Naive thymus-derived CD4-positive, alpha-beta T cell (primary cell): ENCODE measurements at regions of chr1 and their contacts with region 1.

Region 1: DNA sequence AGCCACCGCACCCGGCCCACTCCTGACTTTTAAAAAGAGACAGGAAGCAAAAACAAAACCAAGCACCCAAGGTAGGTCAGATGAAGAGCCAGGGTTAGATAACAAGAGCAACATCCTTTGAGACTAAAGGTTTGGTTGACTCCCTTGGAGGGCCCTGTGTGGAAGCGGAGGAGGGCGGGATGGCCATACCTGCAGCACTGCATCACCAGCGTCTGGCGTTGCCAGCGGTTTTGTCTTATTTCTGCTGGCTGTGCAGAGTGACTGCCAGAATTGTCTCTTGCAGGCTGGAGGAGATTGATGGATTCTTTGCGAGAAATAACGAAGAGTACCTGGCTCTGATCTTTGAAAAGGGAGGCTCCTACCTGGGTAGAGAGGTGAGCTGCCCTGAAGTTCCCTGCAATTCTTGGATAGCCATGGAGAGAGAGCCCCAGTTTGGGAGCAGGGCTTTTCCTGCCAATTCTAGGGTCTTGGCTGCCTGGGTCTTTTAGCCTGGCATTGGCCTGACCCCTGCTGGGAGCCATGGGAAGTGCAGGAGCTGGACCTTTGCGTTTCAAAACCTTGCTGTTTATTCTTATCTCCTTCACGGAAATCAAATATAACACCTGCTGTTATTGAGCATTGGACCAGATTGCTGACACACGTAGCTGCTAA is 24.0 kb downstream of the QSOX1 start:
- DNase-seq: peak; percentile 35 to 68 (median 55)
- ATAC-seq: peak; percentile 73
- H3K4me3 ChIP-seq: no peak overlapping the region
- H3K4me3 Mint-ChIP-seq: no peak overlapping the region
- H3K27ac ChIP-seq: no peak overlapping the region
- H3K27ac Mint-ChIP-seq: peak overlapping the region in 2 of 9 donors; percentile 9 to 55
- H3K4me1 ChIP-seq: no peaks in the 10 kb centered on the region
- H3K4me1 Mint-ChIP-seq: peaks cover 0 to 4% (median 0%) of the 10 kb centered on the region in 7 donors
- H3K27me3 ChIP-seq: no peaks in the 10 kb centered on the region
- H3K27me3 Mint-ChIP-seq: no peaks in the 10 kb centered on the region

Region 2: GRCh38 chr1:179706339-179706941 is 472.2 kb before region 1 on chr1:
- CTCF ChIA-PET with region 1: interaction called, 23 read pairs
- POLR2A ChIA-PET with region 1: no interaction called
- intact Hi-C with region 1: loop called (anchors 1 kb)
- DNase-seq: peak; percentile 27 to 78 (median 68)
- ATAC-seq: peak; percentile 33
- H3K4me3 ChIP-seq: no peak overlapping the region
- H3K4me3 Mint-ChIP-seq: no peak overlapping the region
- H3K27ac ChIP-seq: no peak overlapping the region
- H3K27ac Mint-ChIP-seq: peak overlapping the region in 6 of 9 donors; percentile 13 to 87 (median 72)
- H3K4me1 ChIP-seq: peaks cover 0 to 15% of the 10 kb centered on the region in 2 donors
- H3K4me1 Mint-ChIP-seq: peaks cover 6 to 25% (median 14%) of the 10 kb centered on the region in 7 donors
- H3K27me3 ChIP-seq: no peaks in the 10 kb centered on the region
- H3K27me3 Mint-ChIP-seq: peaks cover 0 to 6% (median 0%) of the 10 kb centered on the region in 5 donors

Region 3: GRCh38 chr1:180096584-180097332 is 81.9 kb before region 1 on chr1:
- CTCF ChIA-PET with region 1: interaction called, 9 read pairs
- POLR2A ChIA-PET with region 1: no interaction called
- intact Hi-C with region 1: loop called in 1 of 2 experiments (anchors 2 kb)
- DNase-seq: no peak
- ATAC-seq: no peak
- H3K4me3 ChIP-seq: no peak overlapping the region
- H3K4me3 Mint-ChIP-seq: no peak overlapping the region
- H3K27ac ChIP-seq: no peak overlapping the region
- H3K27ac Mint-ChIP-seq: no peak overlapping the region
- H3K4me1 ChIP-seq: peaks cover 0 to 5% of the 10 kb centered on the region in 2 donors
- H3K4me1 Mint-ChIP-seq: peaks cover 0 to 11% (median 0%) of the 10 kb centered on the region in 7 donors
- H3K27me3 ChIP-seq: no peaks in the 10 kb centered on the region
- H3K27me3 Mint-ChIP-seq: no peaks in the 10 kb centered on the region

Region 4: DNA sequence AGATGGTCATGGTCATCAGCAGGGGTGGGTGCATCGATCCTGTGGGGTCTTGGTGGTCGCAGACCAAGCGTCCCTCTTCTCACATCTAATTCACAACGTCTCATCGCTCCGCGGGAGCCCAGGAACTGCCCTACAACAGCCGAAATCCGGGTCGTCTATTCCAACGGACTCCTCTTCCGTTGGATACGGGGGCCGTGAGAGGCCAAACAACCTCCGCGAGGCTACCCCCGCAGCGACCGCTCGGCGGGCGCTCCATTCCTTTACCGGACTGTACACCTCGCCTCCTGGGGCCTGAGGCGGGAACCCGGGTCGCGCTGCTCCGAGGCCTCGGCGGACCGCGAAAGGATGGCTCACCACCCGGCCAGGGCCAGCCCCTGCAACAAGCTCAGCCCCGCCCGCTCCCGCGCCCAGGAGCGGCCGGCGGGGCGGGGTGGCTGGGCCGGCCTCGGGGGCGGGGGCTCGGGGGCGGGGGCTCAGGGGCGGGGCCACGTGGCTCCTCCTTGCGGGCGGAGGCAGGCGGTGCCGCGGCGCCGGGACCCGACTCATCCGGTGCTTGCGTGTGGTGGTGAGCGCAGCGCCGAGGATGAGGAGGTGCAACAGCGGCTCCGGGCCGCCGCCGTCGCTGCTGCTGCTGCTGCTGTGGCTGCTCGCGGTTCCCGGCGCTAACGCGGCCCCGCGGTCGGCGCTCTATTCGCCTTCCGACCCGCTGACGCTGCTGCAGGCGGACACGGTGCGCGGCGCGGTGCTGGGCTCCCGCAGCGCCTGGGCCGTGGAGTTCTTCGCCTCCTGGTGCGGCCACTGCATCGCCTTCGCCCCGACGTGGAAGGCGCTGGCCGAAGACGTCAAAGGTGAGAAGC is 24.1 kb before region 1 on chr1 and contains the start of gene QSOX1:
- CTCF ChIA-PET with region 1: interaction called, 5 read pairs
- POLR2A ChIA-PET with region 1: no interaction called
- intact Hi-C with region 1: loop called in 1 of 2 experiments (anchors 2 kb)
- DNase-seq: peak; percentile 81 to 89 (median 86)
- ATAC-seq: peak; percentile 97
- H3K4me3 ChIP-seq: peak within 1 kb of the TSS; percentile 94
- H3K4me3 Mint-ChIP-seq: peak within 1 kb of the TSS; percentile 80 to 99 (median 91)
- H3K27ac ChIP-seq: peak within 1 kb of the TSS; percentile 78
- H3K27ac Mint-ChIP-seq: peak within 1 kb of the TSS; percentile 81 to 95 (median 86)
- H3K4me1 ChIP-seq: peaks cover 7 to 20% of the 10 kb centered on the region in 2 donors
- H3K4me1 Mint-ChIP-seq: peaks cover 24 to 45% (median 37%) of the 10 kb centered on the region in 7 donors
- H3K27me3 ChIP-seq: no peaks in the 10 kb centered on the region
- H3K27me3 Mint-ChIP-seq: no peaks in the 10 kb centered on the region
- total RNA-seq, gene QSOX1: 22.1 to 55.6 (median 25.6) TPM

Region 5: GRCh38 chr1:180415985-180416633 is 237.5 kb after region 1 on chr1:
- CTCF ChIA-PET with region 1: interaction called, 3 read pairs
- POLR2A ChIA-PET with region 1: no interaction called
- intact Hi-C with region 1: loop called in 1 of 2 experiments (anchors 5 kb)
- DNase-seq: peak in 1 of 9 donors; percentile 3
- ATAC-seq: peak; percentile 42
- H3K4me3 ChIP-seq: no peak overlapping the region
- H3K4me3 Mint-ChIP-seq: no peak overlapping the region
- H3K27ac ChIP-seq: no peak overlapping the region
- H3K27ac Mint-ChIP-seq: no peak overlapping the region
- H3K4me1 ChIP-seq: no peaks in the 10 kb centered on the region
- H3K4me1 Mint-ChIP-seq: peaks cover 0 to 2% (median 0%) of the 10 kb centered on the region in 7 donors
- H3K27me3 ChIP-seq: no peaks in the 10 kb centered on the region
- H3K27me3 Mint-ChIP-seq: no peaks in the 10 kb centered on the region